ENCODE measurements at regions of chr5 and their contacts with region 1.

Region 1: GRCh38 chr5:139341650-139342422 is at the start of gene PAIP2:
- DNase-seq: peak; percentile 95 to 98 (median 97)
- H3K4me3 ChIP-seq: peak within 1 kb of the TSS; percentile 71 to 100 (median 97)
- H3K27ac ChIP-seq: peak within 1 kb of the TSS; percentile 94 to 100 (median 100)
- H3K27me3 ChIP-seq: no peaks in the 10 kb centered on the region
- CTCF ChIP-seq: peak; percentile 49 to 95 (median 86)
- total RNA-seq, gene PAIP2: 80.8 to 201 (median 156) TPM

Region 2: GRCh38 chr5:138575194-138576015 is 766.4 kb before region 1 on chr5 and contains the start of gene HSPA9:
- intact Hi-C with region 1: loop called in 1 of 2 experiments (anchors 10 kb)
- DNase-seq: peak; percentile 97 to 99 (median 98)
- H3K4me3 ChIP-seq: peak within 1 kb of the TSS; percentile 74 to 100 (median 98)
- H3K27ac ChIP-seq: peak within 1 kb of the TSS; percentile 94 to 100 (median 100)
- H3K27me3 ChIP-seq: no peaks in the 10 kb centered on the region
- CTCF ChIP-seq: peak in 38 of 56 donors; percentile 8 to 50 (median 22)
- total RNA-seq, gene HSPA9: 167 to 280 (median 215) TPM

Region 3: DNA sequence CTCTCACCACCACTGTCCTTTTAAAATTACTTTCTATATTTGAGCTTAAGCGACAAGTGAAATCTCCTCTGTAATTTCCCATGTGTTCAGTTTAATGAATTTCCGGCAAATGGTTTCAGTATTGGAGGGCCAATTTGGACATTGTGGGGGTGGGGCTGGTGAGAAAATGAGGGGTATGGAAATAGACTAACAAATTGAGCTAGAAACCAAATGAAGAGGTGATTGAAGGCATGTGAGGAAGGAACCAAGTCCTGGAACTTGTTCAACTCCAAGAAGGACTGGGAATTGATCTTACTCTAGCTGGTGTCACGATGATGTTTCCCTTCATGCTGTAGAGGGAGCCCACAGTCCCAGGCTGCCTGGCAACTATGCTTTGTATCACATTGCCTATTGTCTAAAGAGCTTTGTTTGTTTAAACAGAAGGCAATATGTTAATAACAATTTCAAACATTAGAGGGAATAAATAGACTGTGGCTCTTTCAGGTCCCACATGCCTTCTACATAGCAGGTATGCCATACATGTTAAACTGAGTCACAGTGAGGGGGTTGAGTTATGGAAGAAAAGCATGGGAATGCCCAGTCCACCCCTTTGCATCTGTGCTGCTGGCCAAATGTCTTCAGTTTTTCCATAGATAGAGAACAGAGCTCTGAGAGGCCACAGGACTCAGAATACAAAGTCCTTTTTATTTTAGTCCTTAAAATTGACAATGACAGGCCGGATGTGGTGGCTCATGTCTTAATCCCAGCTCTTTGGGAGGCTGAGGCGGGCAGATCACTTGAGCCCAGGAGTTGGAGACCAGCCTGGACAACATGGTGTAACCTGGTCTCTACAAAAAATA is 73.3 kb before region 1 on chr5:
- intact Hi-C with region 1: loop called (anchors 1 to 2 kb)
- DNase-seq: peak in 4 of 10 donors; percentile 50 to 65 (median 58)
- H3K4me3 ChIP-seq: peak overlapping the region in 30 of 59 donors; percentile 1 to 49 (median 19)
- H3K27ac ChIP-seq: peak overlapping the region; percentile 13 to 97 (median 89)
- H3K27me3 ChIP-seq: no peaks in the 10 kb centered on the region
- CTCF ChIP-seq: peak in 54 of 56 donors; percentile 17 to 73 (median 50)

Region 4: GRCh38 chr5:139293504-139294373 is 48.1 kb before region 1 on chr5 and contains the start of gene MATR3:
- intact Hi-C with region 1: loop called (anchors 1 to 2 kb)
- DNase-seq: peak; percentile 82 to 95 (median 92)
- H3K4me3 ChIP-seq: peak within 1 kb of the TSS; percentile 59 to 98 (median 89)
- H3K27ac ChIP-seq: peak within 1 kb of the TSS; percentile 98 to 100 (median 100)
- H3K27me3 ChIP-seq: no peaks in the 10 kb centered on the region
- CTCF ChIP-seq: peak in 27 of 56 donors; percentile 2 to 46 (median 27)
- total RNA-seq, gene MATR3: 154 to 477 (median 345) TPM

Region 5: DNA sequence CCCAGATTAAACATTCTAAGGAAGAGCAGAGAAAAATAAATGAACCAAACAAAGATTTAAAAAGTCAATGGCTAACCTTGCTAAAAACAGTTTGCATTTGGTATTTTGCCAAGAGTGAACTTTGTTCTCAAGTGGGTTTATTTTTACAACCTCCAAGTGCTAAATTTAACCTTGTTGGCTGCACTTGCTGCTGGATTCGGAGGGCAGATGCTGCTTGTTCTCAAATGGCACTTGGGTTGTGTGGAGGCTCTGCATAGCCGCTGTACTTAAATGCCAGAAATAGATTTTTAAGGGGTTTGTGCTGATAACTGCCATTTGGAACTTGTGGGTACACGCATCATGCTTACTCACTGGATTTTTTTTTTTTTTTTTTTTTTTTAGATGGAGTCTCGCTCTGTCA is 75.4 kb after region 1 on chr5:
- intact Hi-C with region 1: loop called in 1 of 2 experiments (anchors 5 kb)
- DNase-seq: peak in 1 of 10 donors; percentile 58
- H3K4me3 ChIP-seq: no peak overlapping the region
- H3K27ac ChIP-seq: peak overlapping the region in 52 of 59 donors; percentile 23 to 96 (median 88)
- H3K27me3 ChIP-seq: no peaks in the 10 kb centered on the region
- CTCF ChIP-seq: peak in 1 of 56 donors; percentile 5